ENCODE measurements at regions of chr15 and their contacts with region 1.

Region 1: GRCh38 chr15:33547876-33548275 is 237.1 kb downstream of the RYR3 start:
- DNase-seq: peak; percentile 82

Region 2: DNA sequence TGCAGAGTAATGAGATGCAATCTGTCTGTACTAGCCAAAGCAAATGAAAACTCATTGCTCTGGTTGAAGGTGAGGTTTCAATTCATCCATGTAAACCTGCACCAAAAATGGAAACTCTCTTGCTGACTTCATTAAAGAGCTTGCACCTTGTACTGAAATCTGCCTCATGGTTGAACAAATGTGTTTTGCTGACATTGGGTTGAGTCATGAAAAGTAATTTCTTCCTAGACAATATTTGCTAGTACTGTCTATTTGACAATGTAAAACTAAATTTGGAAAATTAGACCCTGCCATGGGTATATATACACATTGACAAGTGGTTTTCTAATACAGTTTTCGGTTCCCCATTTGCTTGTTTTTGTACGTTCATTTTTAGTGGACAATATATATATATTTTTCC is 203.8 kb before region 1 on chr15:
- intact Hi-C with region 1: no loop called
- DNase-seq: no peak

Region 3: DNA sequence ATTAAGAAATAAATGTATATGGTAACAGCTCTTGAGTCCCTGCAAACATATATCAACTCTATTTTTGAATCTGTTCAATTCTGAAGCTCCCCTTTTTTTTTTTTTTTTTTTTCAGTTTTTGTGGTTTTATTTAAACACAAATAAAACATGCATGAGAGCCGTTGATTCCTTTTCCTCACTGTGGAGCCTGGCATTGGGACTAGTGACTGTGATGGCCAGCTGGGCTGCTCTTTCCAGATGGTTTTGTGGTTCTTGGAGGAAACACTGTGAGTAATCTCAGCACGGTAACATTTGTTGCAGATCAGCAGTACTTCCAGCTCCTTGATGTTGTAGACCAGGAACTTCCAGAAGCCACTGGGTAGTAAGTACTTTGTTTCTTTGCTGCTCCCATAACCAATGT is 537.9 kb after region 1 on chr15:
- intact Hi-C with region 1: loop called in 1 of 2 experiments (anchors 5 kb)
- DNase-seq: no peak